ENCODE measurements at regions of chr1 and their contacts with region 1.

Region 1: GRCh38 chr1:91165033-91165654 is 143.3 kb upstream of the ZNF644 start:
- DNase-seq: peak; percentile 68 to 97
- H3K4me3 ChIP-seq: no peak overlapping the region
- H3K27ac ChIP-seq: no peak overlapping the region
- H3K4me1 ChIP-seq: peaks cover 0 to 10% (median 3%) of the 10 kb centered on the region in 4 experiments; a peak in 4 of 7 replicates
- H3K27me3 ChIP-seq: peaks cover 0 to 4% (median 0%) of the 10 kb centered on the region in 4 experiments; a peak in 3 of 7 replicates
- CTCF ChIP-seq: peak; percentile 93 to 99 (median 99)
- EP300 ChIP-seq: no peak
- POLR2A ChIP-seq: no peak
- RAD21 ChIP-seq: peak; percentile 95 to 98

Region 2: DNA sequence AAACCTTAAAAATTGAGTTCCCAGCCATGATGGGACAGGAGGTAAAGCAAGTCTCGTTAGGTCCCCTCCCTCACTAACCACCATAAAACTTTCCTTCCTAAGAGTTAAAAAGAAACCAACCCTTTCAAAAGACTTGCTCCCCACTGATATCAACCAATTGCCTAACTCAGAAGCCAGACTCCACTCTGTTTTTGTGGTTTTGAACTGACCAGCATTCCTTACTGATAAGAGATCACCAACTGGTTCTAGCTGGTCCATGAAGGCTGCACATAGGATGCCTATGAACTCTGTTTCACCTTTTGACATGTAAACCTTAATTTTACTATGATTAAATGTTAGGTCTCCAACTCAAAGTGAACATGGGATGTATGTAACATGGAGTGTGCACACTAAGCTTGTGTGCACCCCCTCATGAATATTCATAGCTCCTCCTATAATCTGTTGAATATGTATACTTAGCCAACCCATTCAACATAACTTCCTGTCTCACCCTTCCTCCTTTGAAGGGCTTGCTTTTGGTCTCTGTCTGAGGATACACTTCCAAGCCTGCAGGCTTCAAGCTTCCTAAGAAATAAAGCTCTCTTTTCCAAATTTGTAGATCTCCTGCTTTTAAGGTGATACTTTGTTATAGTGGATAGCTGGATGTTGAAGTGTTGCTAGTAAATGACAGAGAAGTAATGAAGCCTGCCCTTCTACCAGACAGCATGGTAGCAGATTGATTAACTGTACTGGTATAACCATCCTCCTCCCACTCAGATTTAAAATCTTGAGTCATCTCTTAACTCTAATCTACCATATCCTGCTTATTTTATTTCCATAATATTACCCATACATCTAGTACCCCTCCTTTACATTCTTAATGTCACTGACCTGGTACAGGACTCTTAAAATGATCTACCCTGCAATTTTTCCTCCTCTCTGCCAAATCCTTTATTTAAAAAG is 238.9 kb before region 1 on chr1:
- CTCF ChIA-PET with region 1: interaction called, 14 read pairs
- POLR2A ChIA-PET with region 1: no interaction called
- DNase-seq: peak in 1 of 2 experiments; percentile 5
- H3K4me3 ChIP-seq: peak overlapping the region in 1 of 4 experiments; percentile 43; a peak in 2 of 8 replicates
- H3K27ac ChIP-seq: peak overlapping the region; percentile 17; the same call in 1 of the 2 replicates
- H3K4me1 ChIP-seq: peaks cover 2 to 19% (median 13%) of the 10 kb centered on the region in 4 experiments; a peak in 6 of 7 replicates
- H3K27me3 ChIP-seq: no peaks in the 10 kb centered on the region
- CTCF ChIP-seq: no peak
- EP300 ChIP-seq: no peak
- POLR2A ChIP-seq: no peak
- RAD21 ChIP-seq: no peak

Region 3: GRCh38 chr1:91104712-91105111 is 60.4 kb before region 1 on chr1:
- CTCF ChIA-PET with region 1: interaction called, 11 read pairs
- POLR2A ChIA-PET with region 1: no interaction called
- DNase-seq: no peak
- H3K4me3 ChIP-seq: 0 out of 8 replicates have a peak overlapping the region, but pooled peaks of 1 of the 4 experiments have one; percentile 5
- H3K27ac ChIP-seq: no peak overlapping the region; the same call in 1 of the 2 replicates
- H3K4me1 ChIP-seq: peaks cover 5 to 22% (median 14%) of the 10 kb centered on the region in 4 experiments; a peak in 6 of 7 replicates
- H3K27me3 ChIP-seq: no peaks in the 10 kb centered on the region
- CTCF ChIP-seq: no peak
- EP300 ChIP-seq: no peak
- POLR2A ChIP-seq: no peak
- RAD21 ChIP-seq: peak in 1 of 2 experiments; percentile 0; a peak in 1 of 4 replicates

Region 4: DNA sequence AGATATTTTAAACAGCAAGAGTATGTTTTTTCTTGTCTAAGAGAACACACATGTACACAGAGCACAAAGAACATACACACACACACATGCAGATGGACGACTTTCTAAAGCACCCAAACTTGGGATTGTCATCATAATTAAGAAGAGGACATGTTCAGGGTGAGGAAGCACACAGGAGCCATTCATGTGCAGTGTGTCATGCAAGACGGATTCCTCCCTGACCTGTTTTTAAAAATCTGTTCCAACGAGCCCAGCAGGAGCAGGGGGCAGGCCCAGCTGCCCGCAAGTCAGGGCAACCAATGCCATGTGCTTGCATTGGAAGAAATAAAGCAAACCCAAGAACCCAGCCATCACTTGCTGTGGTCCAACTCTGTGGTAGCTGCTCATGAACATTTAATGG is 24.0 kb after region 1 on chr1:
- CTCF ChIA-PET with region 1: interaction called, 18 read pairs
- POLR2A ChIA-PET with region 1: no interaction called
- DNase-seq: no peak
- H3K4me3 ChIP-seq: no peak overlapping the region
- H3K27ac ChIP-seq: no peak overlapping the region
- H3K4me1 ChIP-seq: no peaks in the 10 kb centered on the region; a peak in 1 of 7 replicates
- H3K27me3 ChIP-seq: no peaks in the 10 kb centered on the region
- CTCF ChIP-seq: no peak
- EP300 ChIP-seq: no peak
- POLR2A ChIP-seq: no peak
- RAD21 ChIP-seq: no peak

Region 5: GRCh38 chr1:91261655-91262054 is 96.5 kb after region 1 on chr1:
- CTCF ChIA-PET with region 1: interaction called, 64 read pairs
- POLR2A ChIA-PET with region 1: no interaction called
- DNase-seq: no peak
- H3K4me3 ChIP-seq: no peak overlapping the region
- H3K27ac ChIP-seq: no peak overlapping the region
- H3K4me1 ChIP-seq: no peaks in the 10 kb centered on the region
- H3K27me3 ChIP-seq: no peaks in the 10 kb centered on the region; a peak in 2 of 7 replicates
- CTCF ChIP-seq: no peak
- EP300 ChIP-seq: no peak
- POLR2A ChIP-seq: no peak
- RAD21 ChIP-seq: no peak